ENCODE measurements at regions of chr7 and their contacts with region 1.

Region 1: DNA sequence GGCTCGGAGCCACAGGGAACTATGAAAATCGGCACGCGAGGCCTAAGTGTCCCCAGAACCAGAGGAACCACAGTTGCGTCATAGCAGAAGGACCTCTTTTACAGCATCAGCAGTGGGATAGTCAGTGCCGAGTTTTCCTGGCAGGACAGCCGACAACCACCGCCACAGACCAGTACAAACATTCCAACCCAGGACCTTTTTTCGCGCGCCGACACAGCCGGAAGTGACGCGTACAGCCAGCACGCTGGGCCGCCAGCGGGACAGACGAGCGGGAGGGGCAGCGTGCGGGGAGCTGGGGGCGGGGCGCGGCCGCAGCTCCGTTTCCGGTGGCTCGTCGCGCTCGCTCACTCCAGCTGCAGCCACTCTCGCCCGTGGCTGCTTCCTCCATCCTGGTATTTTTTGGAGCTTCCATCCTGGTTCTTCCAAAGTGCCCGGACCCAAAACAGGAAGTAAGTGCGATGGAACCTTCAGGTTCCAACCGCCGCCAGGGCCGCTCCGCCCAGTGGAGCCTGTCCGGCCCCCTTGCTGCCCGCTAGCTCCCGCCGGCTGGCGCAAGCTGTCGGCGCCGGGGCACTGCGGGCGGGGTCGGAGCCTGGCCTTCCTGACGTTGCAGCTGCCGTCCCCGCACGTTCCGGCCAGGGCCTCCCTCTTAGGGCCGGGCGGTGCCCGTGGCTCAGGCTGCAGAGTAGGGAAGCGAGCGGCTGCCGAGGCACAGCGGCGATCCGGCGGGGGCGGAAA is at the start of gene DMTF1:
- DNase-seq: peak; percentile 89
- ATAC-seq: peak; percentile 84
- H3K4me3 Mint-ChIP-seq: peak within 1 kb of the TSS; percentile 99
- H3K27ac Mint-ChIP-seq: peak within 1 kb of the TSS; percentile 99
- H3K4me1 Mint-ChIP-seq: peaks cover 35% of the 10 kb centered on the region
- H3K27me3 Mint-ChIP-seq: no peaks in the 10 kb centered on the region
- CTCF ChIP-seq: no peak
- total RNA-seq, gene DMTF1: 63.0 to 65.1 TPM

Region 2: GRCh38 chr7:86926732-86927131 is 225.5 kb before region 1 on chr7:
- CTCF ChIA-PET with region 1: interaction called, 51 read pairs
- POLR2A ChIA-PET with region 1: interaction called, 3 read pairs
- intact Hi-C with region 1: no loop called
- DNase-seq: peak; percentile 42
- ATAC-seq: peak; percentile 64
- H3K4me3 Mint-ChIP-seq: no peak overlapping the region
- H3K27ac Mint-ChIP-seq: no peak overlapping the region
- H3K4me1 Mint-ChIP-seq: peaks cover 9% of the 10 kb centered on the region
- H3K27me3 Mint-ChIP-seq: peaks cover 10% of the 10 kb centered on the region
- CTCF ChIP-seq: peak; percentile 77

Region 3: GRCh38 chr7:86932038-86932512 is 220.2 kb before region 1 on chr7:
- CTCF ChIA-PET with region 1: interaction called, 51 read pairs
- POLR2A ChIA-PET with region 1: interaction called, 3 read pairs
- intact Hi-C with region 1: no loop called
- DNase-seq: no peak
- ATAC-seq: no peak
- H3K4me3 Mint-ChIP-seq: no peak overlapping the region
- H3K27ac Mint-ChIP-seq: no peak overlapping the region
- H3K4me1 Mint-ChIP-seq: peaks cover 12% of the 10 kb centered on the region
- H3K27me3 Mint-ChIP-seq: peaks cover 6% of the 10 kb centered on the region
- CTCF ChIP-seq: no peak

Region 4: GRCh38 chr7:86939197-86939814 is 213.0 kb before region 1 on chr7:
- CTCF ChIA-PET with region 1: interaction called, 18 read pairs
- POLR2A ChIA-PET with region 1: no interaction called
- intact Hi-C with region 1: loop called (anchors 1 kb)
- DNase-seq: peak; percentile 59
- ATAC-seq: peak; percentile 67
- H3K4me3 Mint-ChIP-seq: no peak overlapping the region
- H3K27ac Mint-ChIP-seq: no peak overlapping the region
- H3K4me1 Mint-ChIP-seq: no peaks in the 10 kb centered on the region
- H3K27me3 Mint-ChIP-seq: no peaks in the 10 kb centered on the region
- CTCF ChIP-seq: peak; percentile 81

Region 5: DNA sequence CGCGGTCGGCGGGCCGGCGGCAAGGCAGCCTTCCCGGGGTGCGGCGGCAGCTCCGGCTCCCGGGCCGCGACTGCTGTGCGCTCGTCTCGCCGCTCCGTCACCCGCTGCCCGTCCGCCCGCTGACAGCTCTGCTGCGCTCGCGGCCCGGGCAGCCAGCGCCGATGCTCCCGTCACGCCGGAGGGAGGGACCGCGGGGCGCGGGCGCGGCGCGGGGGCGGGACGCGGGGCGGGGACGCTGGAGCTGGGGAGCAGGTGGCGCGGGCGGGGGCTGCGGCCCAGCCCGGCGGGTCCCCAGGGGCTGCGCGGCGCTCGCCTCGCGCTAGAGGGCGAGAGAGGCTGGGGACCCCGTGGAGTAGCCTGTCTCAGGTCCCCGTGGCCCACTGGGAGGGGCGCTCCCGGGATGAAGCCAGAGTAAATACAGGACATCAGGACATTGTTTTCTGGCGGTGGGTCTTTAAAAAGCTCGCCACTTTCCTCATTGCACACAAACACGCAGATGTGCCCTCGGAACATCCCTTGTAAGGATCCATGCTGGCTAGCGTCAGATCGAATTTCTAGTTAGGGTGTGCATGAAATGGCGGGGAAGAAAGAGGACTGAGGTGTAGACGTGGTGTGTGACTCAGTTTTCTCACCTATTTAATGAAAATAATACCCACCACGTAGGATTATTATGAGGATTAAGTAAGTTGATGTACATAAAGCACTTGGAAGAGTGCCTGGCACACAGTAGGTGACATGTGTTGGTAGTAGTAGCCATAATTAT is 92.6 kb before region 1 on chr7 and contains the start of gene ELAPOR2:
- CTCF ChIA-PET with region 1: interaction called, 21 read pairs
- POLR2A ChIA-PET with region 1: interaction called, 4 read pairs
- intact Hi-C with region 1: loop called (anchors 5 kb)
- DNase-seq: peak; percentile 79
- ATAC-seq: peak; percentile 96
- H3K4me3 Mint-ChIP-seq: peak within 1 kb of the TSS; percentile 79
- H3K27ac Mint-ChIP-seq: peak within 1 kb of the TSS; percentile 73
- H3K4me1 Mint-ChIP-seq: peaks cover 13% of the 10 kb centered on the region
- H3K27me3 Mint-ChIP-seq: peaks cover 17% of the 10 kb centered on the region
- CTCF ChIP-seq: peak; percentile 31
- total RNA-seq, gene ELAPOR2: 2.8 to 3.1 TPM

Region 6: DNA sequence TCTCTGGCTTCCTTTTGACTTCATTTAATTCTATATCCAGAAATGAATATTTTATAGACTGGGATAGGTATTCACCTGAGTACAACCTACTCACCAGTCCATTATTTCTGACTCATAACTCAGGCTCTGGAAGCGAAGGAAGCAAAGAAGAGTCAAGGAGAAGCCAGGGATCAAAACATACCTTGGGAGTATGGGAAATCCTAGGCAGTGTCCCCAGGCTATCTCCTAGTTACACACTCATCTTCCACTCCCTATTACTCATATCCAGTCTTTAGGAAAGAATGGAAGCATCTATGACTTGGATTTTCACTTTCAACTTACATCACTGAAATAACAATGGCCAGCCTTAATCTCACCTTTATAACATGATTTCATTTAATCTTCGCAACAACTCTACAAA is 52.0 kb before region 1 on chr7:
- CTCF ChIA-PET with region 1: no interaction called
- POLR2A ChIA-PET with region 1: no interaction called
- intact Hi-C with region 1: no loop called
- DNase-seq: no peak
- ATAC-seq: no peak
- H3K4me3 Mint-ChIP-seq: no peak overlapping the region
- H3K27ac Mint-ChIP-seq: no peak overlapping the region
- H3K4me1 Mint-ChIP-seq: no peaks in the 10 kb centered on the region
- H3K27me3 Mint-ChIP-seq: peaks cover 11% of the 10 kb centered on the region
- CTCF ChIP-seq: no peak

Region 7: GRCh38 chr7:87140271-87140748 is 12.0 kb before region 1 on chr7:
- CTCF ChIA-PET with region 1: interaction called, 11 read pairs
- POLR2A ChIA-PET with region 1: interaction called, 3 read pairs
- intact Hi-C with region 1: no loop called
- DNase-seq: no peak
- ATAC-seq: no peak
- H3K4me3 Mint-ChIP-seq: no peak overlapping the region
- H3K27ac Mint-ChIP-seq: no peak overlapping the region
- H3K4me1 Mint-ChIP-seq: no peaks in the 10 kb centered on the region
- H3K27me3 Mint-ChIP-seq: peaks cover 21% of the 10 kb centered on the region
- CTCF ChIP-seq: no peak

Measured in activated CD8-positive, alpha-beta T cell treated with anti-CD3 and anti-CD28 coated beads for 36 hours (primary cell).